ENCODE measurements at regions of chr9 and their contacts with region 1.

Region 1: DNA sequence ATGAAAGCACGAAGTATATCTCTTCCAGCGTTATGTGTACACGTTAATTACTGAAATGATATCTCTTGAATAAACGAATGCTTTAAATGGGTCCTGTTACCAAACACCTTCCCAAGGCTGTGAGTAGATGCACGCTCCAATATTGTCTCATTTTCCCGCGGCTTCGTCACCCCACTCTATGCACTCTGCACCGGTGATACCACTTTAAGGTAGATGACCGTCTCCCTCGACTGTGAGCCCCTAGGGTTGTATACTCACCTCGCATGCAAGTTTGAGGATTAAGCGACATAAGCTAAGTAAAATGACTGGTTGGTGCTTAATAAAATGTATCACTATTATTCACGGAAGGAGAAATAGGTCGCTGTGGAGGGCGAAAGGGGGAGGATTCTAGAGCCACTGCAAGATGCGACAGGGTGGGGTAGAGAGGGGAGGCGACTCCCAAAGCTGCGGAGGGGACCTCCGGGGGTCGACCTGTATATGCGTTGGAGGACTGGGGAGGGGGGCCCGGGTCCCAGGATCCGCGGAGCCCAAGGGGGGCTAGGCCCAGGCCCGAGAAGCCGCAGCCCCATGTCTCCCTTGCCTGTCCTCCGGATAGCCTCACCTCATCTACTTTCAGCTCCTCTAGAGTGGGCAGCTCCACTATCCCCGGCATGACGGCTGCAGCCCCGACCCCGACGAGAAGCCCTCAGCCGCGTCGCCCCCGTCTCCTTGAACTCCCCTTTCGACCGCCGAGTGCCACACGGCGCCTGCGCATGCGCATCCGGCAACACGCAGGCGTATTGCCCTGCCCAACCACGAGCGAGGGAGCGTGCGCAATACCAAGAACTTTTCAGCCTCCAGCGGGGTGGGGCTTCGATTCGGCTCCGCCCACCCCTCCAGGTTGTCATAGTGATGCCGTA is at the starts of genes MORN5 and NDUFA8:
- DNase-seq: peak; percentile 90 to 98 (median 96)
- ATAC-seq: peak; percentile 96
- H3K4me3 ChIP-seq: peak within 1 kb of the TSS; percentile 68 to 99
- H3K4me3 Mint-ChIP-seq: peak within 1 kb of the TSS; percentile 99
- H3K27ac ChIP-seq: peak within 1 kb of the TSS; percentile 74 to 86
- H3K27ac Mint-ChIP-seq: peak within 1 kb of the TSS; percentile 98
- H3K4me1 ChIP-seq: peaks cover 27% of the 10 kb centered on the region
- H3K4me1 Mint-ChIP-seq: peaks cover 42% of the 10 kb centered on the region
- H3K27me3 ChIP-seq: no peaks in the 10 kb centered on the region
- H3K27me3 Mint-ChIP-seq: peaks cover 14% of the 10 kb centered on the region
- CTCF ChIP-seq: no peak
- total RNA-seq, gene MORN5: not detected
- total RNA-seq, gene NDUFA8: 5.7 to 7.0 TPM

Region 2: DNA sequence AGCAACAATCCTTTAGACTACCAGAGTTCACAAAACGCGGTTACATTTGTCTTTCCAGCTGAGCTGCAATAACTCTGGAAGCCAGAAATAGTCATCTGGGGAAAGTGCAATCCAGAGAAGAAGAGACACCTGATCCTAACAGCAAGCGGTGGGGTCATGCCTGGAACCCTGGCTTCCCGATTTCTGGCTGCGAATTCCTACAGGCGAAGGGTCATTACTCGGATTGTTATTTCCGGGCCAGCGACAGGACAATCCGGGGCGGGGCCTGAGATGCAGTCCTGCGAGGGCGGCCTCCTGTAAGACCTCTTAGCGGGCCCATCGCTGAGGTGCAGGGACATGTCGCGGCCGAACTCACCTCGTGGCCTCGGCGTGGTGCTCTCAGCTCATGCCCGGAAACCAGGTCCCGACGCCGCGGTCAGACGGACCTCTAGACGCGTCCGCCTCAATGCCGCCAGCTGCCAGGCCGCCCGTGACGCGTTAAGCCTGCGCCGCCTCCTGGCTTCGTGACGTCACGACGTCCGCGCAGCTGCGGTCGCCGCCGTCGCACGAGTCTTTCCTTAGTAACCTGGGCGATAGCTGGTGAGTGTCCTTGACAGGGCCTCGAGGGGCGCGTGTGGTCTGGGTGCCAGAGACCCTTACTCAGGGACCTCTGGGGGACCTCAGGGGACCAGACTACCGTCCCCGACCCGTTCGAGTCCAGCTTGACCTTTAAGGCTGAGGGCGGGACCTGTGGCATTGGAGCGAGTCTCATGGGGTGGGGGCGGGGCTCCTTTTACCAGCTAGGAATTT is 105.3 kb after region 1 on chr9 and contains the starts of genes MRRF and RBM18:
- CTCF ChIA-PET with region 1: no interaction called
- POLR2A ChIA-PET with region 1: no interaction called
- intact Hi-C with region 1: loop called (anchors 1 kb)
- DNase-seq: peak; percentile 80 to 95 (median 87)
- ATAC-seq: peak; percentile 84
- H3K4me3 ChIP-seq: peak within 1 kb of the TSS; percentile 79 to 91
- H3K4me3 Mint-ChIP-seq: peak within 1 kb of the TSS; percentile 95
- H3K27ac ChIP-seq: peak within 1 kb of the TSS; percentile 95 to 99
- H3K27ac Mint-ChIP-seq: peak within 1 kb of the TSS; percentile 98
- H3K4me1 ChIP-seq: peaks cover 38% of the 10 kb centered on the region
- H3K4me1 Mint-ChIP-seq: peaks cover 60% of the 10 kb centered on the region
- H3K27me3 ChIP-seq: no peaks in the 10 kb centered on the region
- H3K27me3 Mint-ChIP-seq: no peaks in the 10 kb centered on the region
- CTCF ChIP-seq: no peak
- total RNA-seq, gene MRRF: 22.9 to 23.2 TPM
- total RNA-seq, gene RBM18: 34.0 to 38.9 TPM

Region 3: GRCh38 chr9:122318284-122318683 is 159.0 kb after region 1 on chr9:
- CTCF ChIA-PET with region 1: no interaction called
- POLR2A ChIA-PET with region 1: no interaction called
- intact Hi-C with region 1: no loop called
- DNase-seq: no peak
- ATAC-seq: no peak
- H3K4me3 ChIP-seq: no peak overlapping the region
- H3K4me3 Mint-ChIP-seq: no peak overlapping the region
- H3K27ac ChIP-seq: no peak overlapping the region
- H3K27ac Mint-ChIP-seq: no peak overlapping the region
- H3K4me1 ChIP-seq: no peaks in the 10 kb centered on the region
- H3K4me1 Mint-ChIP-seq: no peaks in the 10 kb centered on the region
- H3K27me3 ChIP-seq: no peaks in the 10 kb centered on the region
- H3K27me3 Mint-ChIP-seq: no peaks in the 10 kb centered on the region
- CTCF ChIP-seq: no peak